Activated CD4-positive, alpha-beta T cell treated with anti-CD3 and anti-CD28 coated beads for 36 hours (primary cell): ENCODE measurements at regions of chr12 and their contacts with region 1.

Region 1: DNA sequence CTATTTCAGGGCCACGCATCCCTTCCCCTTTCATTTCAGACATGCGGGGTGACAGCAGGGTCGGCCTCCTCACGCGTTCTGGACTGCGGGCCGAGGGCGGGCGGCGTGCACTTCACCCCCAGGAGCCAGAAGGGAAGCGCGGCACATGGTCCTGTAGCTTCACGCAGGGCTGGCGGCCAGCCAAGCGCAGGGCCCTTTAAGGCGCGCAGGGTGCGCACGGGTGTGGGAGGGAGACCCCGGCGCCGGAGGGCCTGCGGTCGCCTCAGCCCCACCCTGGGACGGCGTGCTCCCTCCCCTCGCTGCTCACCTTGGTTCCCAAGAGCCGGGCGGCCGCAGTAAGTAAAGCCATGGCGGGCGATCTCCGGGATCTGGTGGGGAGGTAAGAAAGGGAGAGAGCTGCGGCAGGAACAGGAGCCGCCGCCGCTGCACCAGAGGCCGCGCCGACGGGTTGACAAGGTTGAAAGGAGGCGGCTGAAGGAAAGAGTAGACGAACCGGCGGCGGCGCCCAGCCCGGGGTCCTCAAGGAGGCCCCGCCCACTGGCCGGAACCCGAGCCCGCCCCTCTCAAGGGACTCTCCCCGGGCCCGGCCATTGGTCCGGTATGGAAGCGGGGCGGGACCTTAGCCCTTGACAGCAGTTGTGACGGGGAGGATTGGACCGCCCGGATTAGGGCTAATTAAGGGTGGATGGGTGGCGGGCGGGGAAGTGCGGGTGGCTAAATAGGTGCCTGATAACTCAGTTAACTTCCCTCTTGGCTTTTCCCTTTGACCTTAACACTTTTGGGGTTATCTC is at the start of gene CS:
- DNase-seq: peak; percentile 99
- ATAC-seq: peak; percentile 98
- H3K4me3 Mint-ChIP-seq: peak within 1 kb of the TSS; percentile 96
- H3K27ac Mint-ChIP-seq: peak within 1 kb of the TSS; percentile 91
- H3K4me1 Mint-ChIP-seq: peaks cover 49% of the 10 kb centered on the region
- H3K27me3 Mint-ChIP-seq: no peaks in the 10 kb centered on the region
- total RNA-seq, gene CS: 197 to 293 TPM

Region 2: GRCh38 chr12:54549774-54550451 is 1750.1 kb before region 1 on chr12:
- CTCF ChIA-PET with region 1: no interaction called
- POLR2A ChIA-PET with region 1: no interaction called
- intact Hi-C with region 1: no loop called
- DNase-seq: peak; percentile 75
- ATAC-seq: peak; percentile 91
- H3K4me3 Mint-ChIP-seq: peak overlapping the region; percentile 81
- H3K27ac Mint-ChIP-seq: peak overlapping the region; percentile 83
- H3K4me1 Mint-ChIP-seq: peaks cover 37% of the 10 kb centered on the region
- H3K27me3 Mint-ChIP-seq: peaks cover 6% of the 10 kb centered on the region

Region 3: DNA sequence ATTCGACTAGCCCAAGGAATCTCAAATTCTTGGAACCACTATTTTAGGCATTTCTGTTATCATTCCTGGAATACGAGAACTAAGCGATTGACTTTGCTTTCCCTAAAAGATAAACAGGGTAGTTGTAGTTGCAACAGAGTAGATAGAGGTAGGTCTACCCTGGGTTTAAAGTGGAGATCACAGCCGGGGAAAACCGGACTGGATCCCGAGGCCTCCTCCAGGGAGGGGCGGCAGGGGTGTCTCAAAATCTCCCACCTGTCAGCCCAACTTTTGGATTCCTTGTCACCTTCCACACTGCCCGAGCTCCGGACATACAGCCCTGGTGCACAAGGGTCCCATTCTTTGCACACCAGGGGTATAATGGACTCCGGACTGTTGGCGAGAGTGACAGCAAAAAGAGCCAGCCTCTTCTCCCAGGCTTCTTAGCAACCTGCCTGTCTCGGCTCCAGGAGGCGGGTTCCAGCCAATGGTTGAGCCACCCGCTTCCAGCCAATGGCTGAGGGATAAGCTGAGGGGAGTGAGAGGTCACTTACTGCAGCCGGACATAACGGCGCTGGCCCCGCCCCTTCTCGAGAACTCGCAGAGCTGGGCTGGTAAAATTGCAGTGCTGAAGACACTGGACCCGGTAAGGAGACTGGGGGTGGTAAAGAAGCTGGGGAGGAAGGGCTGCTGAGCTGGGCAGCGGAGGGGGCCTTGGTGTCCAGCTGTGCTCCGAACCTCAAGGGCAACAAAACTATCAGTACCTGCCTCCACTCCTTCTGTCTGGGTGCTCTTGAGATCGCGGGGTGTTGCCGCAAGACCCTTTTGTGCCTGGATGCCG is 303.1 kb before region 1 on chr12 and contains the start of gene SUOX:
- CTCF ChIA-PET with region 1: no interaction called
- POLR2A ChIA-PET with region 1: no interaction called
- intact Hi-C with region 1: no loop called
- DNase-seq: peak; percentile 65
- ATAC-seq: peak; percentile 87
- H3K4me3 Mint-ChIP-seq: peak within 1 kb of the TSS; percentile 56
- H3K27ac Mint-ChIP-seq: peak within 1 kb of the TSS; percentile 37
- H3K4me1 Mint-ChIP-seq: peaks cover 20% of the 10 kb centered on the region
- H3K27me3 Mint-ChIP-seq: peaks cover 3% of the 10 kb centered on the region
- total RNA-seq, gene SUOX: 2.9 to 3.4 TPM

Region 4: DNA sequence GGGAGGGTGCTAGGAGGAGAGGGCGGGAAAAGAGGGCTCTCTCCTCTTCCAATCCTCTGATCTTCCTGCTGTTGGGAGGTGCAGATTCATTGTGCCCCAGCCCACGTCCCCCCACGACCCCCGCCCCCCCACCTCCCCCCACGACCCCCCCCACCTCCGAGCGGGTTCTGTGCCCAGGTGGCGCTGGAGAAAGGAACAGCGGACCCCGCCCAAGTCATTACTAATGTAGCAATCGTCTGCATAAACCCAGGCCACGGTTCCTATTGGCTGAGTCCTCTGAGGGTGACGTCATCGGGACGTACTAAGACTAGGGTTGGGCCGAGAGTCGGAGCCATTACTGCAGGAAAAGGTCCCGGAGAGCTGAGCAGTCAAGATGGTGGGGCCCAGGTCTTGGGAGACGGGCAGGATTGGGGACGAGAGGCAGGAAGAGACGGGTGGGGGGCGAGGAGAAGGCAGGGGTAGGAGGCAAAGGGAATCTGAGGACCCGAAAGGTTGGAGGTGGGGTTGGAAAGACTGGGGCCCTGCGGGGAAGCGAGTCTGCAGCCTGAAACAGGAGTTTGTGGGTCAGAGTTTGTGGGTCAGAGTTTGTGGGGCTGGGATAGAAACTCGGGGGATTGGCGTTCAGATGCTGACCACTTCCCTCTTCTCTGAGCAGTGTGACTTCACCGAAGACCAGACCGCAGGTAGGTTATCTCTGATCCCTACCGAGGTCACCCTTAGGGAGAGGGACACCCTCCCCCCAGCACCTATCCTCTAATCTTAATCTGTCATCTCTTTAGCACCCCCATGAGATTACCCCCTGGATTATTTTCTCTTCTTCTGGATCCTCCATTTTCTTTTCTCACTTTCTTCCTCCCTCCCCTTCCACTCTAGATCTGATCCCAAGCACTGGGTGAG is 141.8 kb before region 1 on chr12 and contains the start of gene MYL6:
- CTCF ChIA-PET with region 1: no interaction called
- POLR2A ChIA-PET with region 1: no interaction called
- intact Hi-C with region 1: loop called in 1 of 2 experiments (anchors 1 kb)
- DNase-seq: peak; percentile 96
- ATAC-seq: peak; percentile 85
- H3K4me3 Mint-ChIP-seq: peak within 1 kb of the TSS; percentile 99
- H3K27ac Mint-ChIP-seq: peak within 1 kb of the TSS; percentile 96
- H3K4me1 Mint-ChIP-seq: peaks cover 30% of the 10 kb centered on the region
- H3K27me3 Mint-ChIP-seq: no peaks in the 10 kb centered on the region
- total RNA-seq, gene MYL6: 692 to 918 TPM

Region 5: GRCh38 chr12:56258057-56258819 is 41.8 kb before region 1 on chr12 and contains the start of gene ANKRD52:
- CTCF ChIA-PET with region 1: interaction called, 4 read pairs
- POLR2A ChIA-PET with region 1: no interaction called
- intact Hi-C with region 1: loop called in 1 of 2 experiments (anchors 1 kb)
- DNase-seq: peak; percentile 90
- ATAC-seq: peak; percentile 92
- H3K4me3 Mint-ChIP-seq: peak within 1 kb of the TSS; percentile 83
- H3K27ac Mint-ChIP-seq: peak within 1 kb of the TSS; percentile 72
- H3K4me1 Mint-ChIP-seq: peaks cover 16% of the 10 kb centered on the region
- H3K27me3 Mint-ChIP-seq: no peaks in the 10 kb centered on the region
- total RNA-seq, gene ANKRD52: 29.2 to 31.0 TPM

Region 6: GRCh38 chr12:56266693-56267442 is 33.2 kb before region 1 on chr12 and contains the start of gene COQ10A:
- CTCF ChIA-PET with region 1: interaction called, 4 read pairs
- POLR2A ChIA-PET with region 1: no interaction called
- intact Hi-C with region 1: loop called in 1 of 2 experiments (anchors 1 kb)
- DNase-seq: peak; percentile 90
- ATAC-seq: peak; percentile 90
- H3K4me3 Mint-ChIP-seq: peak within 1 kb of the TSS; percentile 89
- H3K27ac Mint-ChIP-seq: peak within 1 kb of the TSS; percentile 89
- H3K4me1 Mint-ChIP-seq: peaks cover 9% of the 10 kb centered on the region
- H3K27me3 Mint-ChIP-seq: no peaks in the 10 kb centered on the region
- total RNA-seq, gene COQ10A: 5.2 to 7.5 TPM

Region 7: DNA sequence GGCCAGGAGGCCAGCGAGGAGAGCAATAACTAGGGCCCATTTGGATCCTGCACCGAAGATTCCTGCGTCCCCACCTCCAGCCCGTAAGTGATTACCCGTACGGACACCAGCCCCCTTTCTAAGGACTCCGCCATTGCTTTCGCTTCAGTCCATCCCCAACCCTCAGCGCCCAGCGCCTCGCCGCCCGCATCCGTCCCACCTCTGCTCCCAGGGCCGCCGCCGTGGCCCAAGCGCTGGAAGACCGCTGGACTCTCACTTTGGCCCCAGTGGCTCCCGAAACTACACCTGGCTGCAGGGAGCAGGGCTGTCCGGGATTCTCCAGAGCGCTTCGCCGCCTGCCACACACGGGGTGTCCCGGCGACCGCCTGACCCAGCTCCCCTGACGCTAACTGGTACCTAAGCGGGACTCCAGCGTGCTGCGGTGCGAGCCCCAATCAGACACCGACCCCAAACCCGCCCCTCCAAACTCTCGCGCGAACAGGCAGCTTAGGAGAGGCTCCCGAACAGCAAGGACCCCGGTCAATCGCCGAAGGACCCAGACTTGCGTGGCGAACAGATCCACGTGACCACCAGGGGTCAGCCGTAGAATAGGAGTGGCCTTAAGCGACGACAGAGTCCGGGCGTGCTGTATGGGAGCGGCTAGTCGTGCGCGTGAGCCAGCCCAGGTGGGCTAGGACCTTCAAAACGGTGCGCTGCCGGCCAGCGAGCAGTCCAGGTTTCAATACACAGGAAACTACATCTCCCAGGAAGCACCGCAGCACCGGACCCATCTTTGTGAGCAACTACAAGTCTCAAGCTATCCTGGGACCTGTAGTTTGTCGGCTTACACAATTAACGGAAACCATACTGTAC is 15.8 kb after region 1 on chr12 and contains the start of gene CNPY2:
- CTCF ChIA-PET with region 1: no interaction called
- POLR2A ChIA-PET with region 1: interaction called, 7 read pairs
- intact Hi-C with region 1: loop called (anchors 1 kb)
- DNase-seq: peak; percentile 95
- ATAC-seq: peak; percentile 93
- H3K4me3 Mint-ChIP-seq: peak within 1 kb of the TSS; percentile 97
- H3K27ac Mint-ChIP-seq: peak within 1 kb of the TSS; percentile 95
- H3K4me1 Mint-ChIP-seq: peaks cover 18% of the 10 kb centered on the region
- H3K27me3 Mint-ChIP-seq: no peaks in the 10 kb centered on the region
- total RNA-seq, gene CNPY2: 77.4 to 82.6 TPM